ENCODE measurements at regions of chr12 and their contacts with region 1.

Region 1: DNA sequence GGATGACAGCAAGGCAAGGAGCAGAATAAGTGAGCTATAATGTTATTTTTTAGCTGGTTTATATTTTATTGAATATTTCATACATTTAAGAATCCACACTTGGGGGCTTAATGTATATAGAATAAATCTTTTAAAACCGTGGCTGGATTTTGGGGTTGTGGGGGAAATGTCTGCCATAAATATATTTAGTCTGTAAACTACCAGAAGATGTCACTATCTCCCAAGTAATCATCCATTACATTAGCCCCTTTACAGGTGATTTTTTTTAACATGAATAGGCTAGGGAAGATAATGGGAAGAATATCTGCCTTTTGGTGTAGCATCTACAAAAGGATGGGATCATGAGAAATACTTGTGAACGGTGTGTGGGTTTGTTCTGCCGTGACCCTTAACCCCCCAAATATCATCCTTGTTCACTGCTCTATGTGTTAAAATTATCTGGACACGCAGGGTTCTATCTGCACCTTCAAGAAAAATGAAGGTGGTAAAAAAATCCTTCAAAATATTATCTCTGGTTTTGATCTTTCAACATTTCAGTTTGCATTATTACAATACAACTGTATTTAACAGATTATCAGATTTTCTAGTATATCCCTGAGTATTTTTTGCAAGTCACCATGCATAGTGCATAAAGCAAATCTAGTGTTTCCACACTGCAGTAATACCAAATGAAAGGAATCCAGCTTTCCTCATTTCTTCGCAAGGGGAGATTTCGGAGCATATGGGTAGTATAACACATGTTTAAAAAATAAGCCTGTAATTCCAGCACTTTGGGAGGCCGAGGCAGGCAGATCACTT is 8.0 kb upstream of the SLC17A8 start:
- DNase-seq: no peak
- ATAC-seq: peak in 2 of 8 donors; percentile 42 to 50
- H3K4me3 ChIP-seq: no peak overlapping the region
- H3K27ac ChIP-seq: no peak overlapping the region
- H3K4me1 ChIP-seq: no peaks in the 10 kb centered on the region
- H3K27me3 ChIP-seq: peaks cover 0 to 4% (median 0%) of the 10 kb centered on the region in 7 donors
- CTCF ChIP-seq: peak in 7 of 9 donors; percentile 21 to 63 (median 50)

Region 2: GRCh38 chr12:100311317-100311716 is 37.5 kb before region 1 on chr12:
- intact Hi-C with region 1: no loop called
- DNase-seq: no peak
- ATAC-seq: peak in 3 of 8 donors; percentile 42 to 58 (median 57)
- H3K4me3 ChIP-seq: no peak overlapping the region
- H3K27ac ChIP-seq: peak overlapping the region in 3 of 10 donors; percentile 42 to 56 (median 45)
- H3K4me1 ChIP-seq: peaks cover 0 to 19% (median 0%) of the 10 kb centered on the region in 9 donors
- H3K27me3 ChIP-seq: no peaks in the 10 kb centered on the region
- CTCF ChIP-seq: no peak

Region 3: GRCh38 chr12:100404769-100405407 is 56.0 kb after region 1 on chr12:
- intact Hi-C with region 1: loop called in 1 of 10 experiments (anchors 5 kb)
- DNase-seq: no peak
- ATAC-seq: no peak
- H3K4me3 ChIP-seq: no peak overlapping the region
- H3K27ac ChIP-seq: no peak overlapping the region
- H3K4me1 ChIP-seq: no peaks in the 10 kb centered on the region
- H3K27me3 ChIP-seq: no peaks in the 10 kb centered on the region
- CTCF ChIP-seq: peak in 8 of 9 donors; percentile 12 to 43 (median 38)

Region 4: GRCh38 chr12:100668945-100669536 is 320.2 kb after region 1 on chr12:
- intact Hi-C with region 1: loop called in 1 of 10 experiments (anchors 10 kb)
- DNase-seq: peak; percentile 43 to 61
- ATAC-seq: peak in 3 of 8 donors; percentile 39 to 53 (median 49)
- H3K4me3 ChIP-seq: no peak overlapping the region
- H3K27ac ChIP-seq: no peak overlapping the region
- H3K4me1 ChIP-seq: no peaks in the 10 kb centered on the region
- H3K27me3 ChIP-seq: peaks cover 0 to 13% (median 7%) of the 10 kb centered on the region in 7 donors
- CTCF ChIP-seq: peak; percentile 30 to 80 (median 66)